PC-9 (cell line): ENCODE measurements at regions of chr19 and their contacts with region 1.

Region 1: GRCh38 chr19:37931881-37932655 is 25.1 kb downstream of the SIPA1L3 start:
- DNase-seq: peak; percentile 92 to 95
- H3K4me3 ChIP-seq: peak overlapping the region; percentile 44
- H3K27ac ChIP-seq: peak overlapping the region; percentile 74
- H3K4me1 ChIP-seq: peaks cover 62% of the 10 kb centered on the region
- H3K27me3 ChIP-seq: no peaks in the 10 kb centered on the region
- CTCF ChIP-seq: no peak

Region 2: DNA sequence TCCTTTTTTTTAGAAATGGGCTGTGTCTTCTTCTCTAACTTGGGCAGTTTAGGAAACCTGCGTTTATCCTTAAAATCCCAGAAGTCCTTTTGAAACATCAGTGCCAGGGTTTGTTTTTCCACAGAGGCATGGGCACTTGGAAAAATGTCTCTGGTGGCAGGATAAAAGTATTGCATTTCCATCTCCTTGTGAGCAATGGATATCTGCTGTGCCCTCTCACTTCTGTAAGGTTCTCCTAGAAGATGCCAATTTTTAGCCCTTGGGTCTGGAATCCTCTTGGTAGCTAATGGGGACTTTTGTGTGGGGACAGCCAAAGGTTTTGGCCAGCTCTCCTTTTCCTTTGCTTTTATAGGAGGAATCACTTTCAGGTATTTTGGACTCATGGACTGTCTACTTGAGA is 46.7 kb before region 1 on chr19:
- CTCF ChIA-PET with region 1: no interaction called
- POLR2A ChIA-PET with region 1: no interaction called
- intact Hi-C with region 1: no loop called
- DNase-seq: no peak
- H3K4me3 ChIP-seq: no peak overlapping the region
- H3K27ac ChIP-seq: no peak overlapping the region
- H3K4me1 ChIP-seq: no peaks in the 10 kb centered on the region
- H3K27me3 ChIP-seq: peaks cover 58% of the 10 kb centered on the region
- CTCF ChIP-seq: 0 out of 2 replicates have a peak, but pooled peaks have one; percentile 18

Region 3: DNA sequence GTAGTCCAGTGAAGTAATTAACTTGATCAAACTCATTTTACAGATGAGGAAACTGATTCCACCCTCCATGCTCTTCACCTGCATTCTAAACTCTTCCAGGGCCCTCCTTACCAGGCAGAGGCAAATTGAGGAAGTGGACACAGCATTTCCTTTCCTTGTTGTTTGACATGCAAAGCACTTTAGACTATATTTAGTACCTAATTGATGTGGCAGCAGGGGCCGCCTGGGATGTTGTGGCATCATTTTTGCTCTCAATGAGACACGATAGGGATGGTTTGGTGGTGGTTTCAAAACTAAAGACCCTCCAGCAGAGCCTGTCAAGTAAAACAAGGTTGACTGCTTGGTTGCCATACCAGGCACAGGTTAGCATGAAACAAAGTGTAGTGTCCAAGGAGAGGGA is 17.2 kb before region 1 on chr19:
- CTCF ChIA-PET with region 1: no interaction called
- POLR2A ChIA-PET with region 1: interaction called, 10 read pairs
- intact Hi-C with region 1: no loop called
- DNase-seq: no peak
- H3K4me3 ChIP-seq: no peak overlapping the region
- H3K27ac ChIP-seq: no peak overlapping the region
- H3K4me1 ChIP-seq: no peaks in the 10 kb centered on the region
- H3K27me3 ChIP-seq: no peaks in the 10 kb centered on the region
- CTCF ChIP-seq: no peak

Region 4: DNA sequence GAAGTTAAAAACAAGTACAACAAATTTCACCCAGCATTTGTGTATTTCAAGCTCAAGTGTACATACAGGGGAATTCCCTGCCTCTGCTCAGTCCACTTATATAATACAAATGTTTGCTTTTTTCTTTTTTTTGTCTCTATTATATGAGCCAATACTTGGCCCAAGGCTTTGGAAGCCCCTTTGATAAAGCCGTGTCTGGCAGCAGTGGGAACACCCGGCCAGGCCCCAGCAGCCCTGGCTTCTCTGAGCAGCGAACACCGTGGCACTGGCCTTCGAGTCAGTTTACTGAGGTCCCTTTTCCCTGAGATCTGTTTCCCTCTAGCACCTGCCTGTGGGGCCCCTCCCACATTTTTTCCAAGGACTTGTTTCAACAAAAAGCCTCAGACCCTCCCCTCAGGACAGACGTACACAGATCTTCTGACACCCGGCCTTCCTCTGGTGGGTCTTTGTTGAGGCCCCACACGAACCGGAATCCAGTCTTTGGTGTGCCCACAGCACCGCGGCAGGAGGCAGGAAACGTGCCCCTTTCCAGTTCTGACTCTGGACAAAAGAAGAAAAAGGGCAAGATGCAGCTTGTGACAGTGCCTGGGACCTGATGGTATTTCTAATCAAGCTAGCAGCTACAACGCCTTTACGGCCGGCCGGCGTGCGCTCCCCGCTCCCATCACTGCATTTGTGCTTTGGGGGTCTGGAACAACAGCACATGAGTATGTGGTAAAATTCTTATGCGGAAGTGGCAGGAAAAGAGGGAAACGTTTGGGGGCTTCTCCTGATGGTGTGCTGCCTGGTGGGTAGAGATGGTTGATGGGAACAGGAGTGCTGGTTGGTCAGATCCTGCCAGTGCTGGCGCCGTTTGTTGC is 11.2 kb before region 1 on chr19:
- CTCF ChIA-PET with region 1: no interaction called
- POLR2A ChIA-PET with region 1: interaction called, 16 read pairs
- intact Hi-C with region 1: no loop called
- DNase-seq: no peak
- H3K4me3 ChIP-seq: no peak overlapping the region
- H3K27ac ChIP-seq: no peak overlapping the region
- H3K4me1 ChIP-seq: no peaks in the 10 kb centered on the region
- H3K27me3 ChIP-seq: no peaks in the 10 kb centered on the region
- CTCF ChIP-seq: no peak

Region 5: DNA sequence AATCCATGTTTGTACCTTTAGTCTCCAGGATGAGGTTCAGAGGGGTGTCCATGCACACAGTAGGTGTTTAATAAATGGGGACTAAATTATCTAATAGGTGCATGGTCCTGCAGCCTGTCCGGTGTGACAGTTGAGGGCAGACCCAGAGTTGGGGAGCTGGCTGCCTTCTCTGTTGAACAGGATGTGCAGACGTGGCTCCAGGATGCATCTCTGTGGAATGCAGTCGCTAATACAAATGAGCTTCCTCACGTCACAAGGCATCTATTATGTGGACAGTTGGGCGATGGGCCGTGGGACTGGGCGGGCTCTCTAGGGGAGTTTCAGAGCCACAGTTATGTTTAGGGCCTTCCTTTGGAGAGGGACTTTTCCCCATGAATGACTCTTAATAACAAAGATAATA is 45.9 kb after region 1 on chr19:
- CTCF ChIA-PET with region 1: no interaction called
- POLR2A ChIA-PET with region 1: no interaction called
- intact Hi-C with region 1: no loop called
- DNase-seq: no peak
- H3K4me3 ChIP-seq: no peak overlapping the region
- H3K27ac ChIP-seq: no peak overlapping the region
- H3K4me1 ChIP-seq: peaks cover 11% of the 10 kb centered on the region
- H3K27me3 ChIP-seq: no peaks in the 10 kb centered on the region
- CTCF ChIP-seq: no peak

Region 6: GRCh38 chr19:37988758-37989635 is 56.9 kb after region 1 on chr19:
- CTCF ChIA-PET with region 1: interaction called, 8 read pairs
- POLR2A ChIA-PET with region 1: no interaction called
- intact Hi-C with region 1: loop called (anchors 1 kb)
- DNase-seq: no peak
- H3K4me3 ChIP-seq: no peak overlapping the region
- H3K27ac ChIP-seq: no peak overlapping the region
- H3K4me1 ChIP-seq: peaks cover 41% of the 10 kb centered on the region
- H3K27me3 ChIP-seq: no peaks in the 10 kb centered on the region
- CTCF ChIP-seq: no peak

Region 7: DNA sequence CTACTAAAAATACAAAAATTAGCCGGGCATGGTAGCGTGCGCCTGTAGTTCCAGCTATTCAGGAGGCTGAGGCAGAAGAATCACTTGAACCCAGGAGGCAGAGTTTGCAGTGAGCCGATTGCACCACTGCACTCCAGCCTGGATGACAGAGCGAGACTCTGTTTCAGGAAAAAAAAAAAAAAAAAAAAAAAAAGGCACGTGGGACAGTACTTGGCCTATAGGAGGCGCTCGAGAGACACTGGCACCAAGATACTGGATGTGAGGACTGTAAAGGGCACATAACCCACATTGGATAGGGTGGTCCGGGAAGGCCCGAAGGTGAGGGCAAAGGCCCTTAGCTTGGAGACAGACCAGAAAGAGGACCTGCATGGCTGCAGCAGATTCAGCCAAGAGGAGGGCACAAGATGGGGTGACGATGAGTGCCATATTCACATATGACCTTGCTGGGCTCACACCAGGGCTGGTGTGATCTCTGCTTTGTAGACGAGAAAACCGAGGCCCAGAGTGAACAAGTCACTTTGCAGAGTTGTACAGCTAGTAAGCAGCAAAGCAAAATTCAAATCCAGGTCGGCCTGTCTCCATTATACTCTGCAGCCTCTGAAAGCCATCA is 202.6 kb after region 1 on chr19:
- CTCF ChIA-PET with region 1: interaction called, 17 read pairs
- POLR2A ChIA-PET with region 1: no interaction called
- intact Hi-C with region 1: no loop called
- DNase-seq: peak in 1 of 2 experiments; percentile 20
- H3K4me3 ChIP-seq: no peak overlapping the region
- H3K27ac ChIP-seq: no peak overlapping the region
- H3K4me1 ChIP-seq: no peaks in the 10 kb centered on the region
- H3K27me3 ChIP-seq: no peaks in the 10 kb centered on the region
- CTCF ChIP-seq: peak; percentile 73